PC-9 (cell line): ENCODE measurements at regions of chr12 and their contacts with region 1.

Region 1: DNA sequence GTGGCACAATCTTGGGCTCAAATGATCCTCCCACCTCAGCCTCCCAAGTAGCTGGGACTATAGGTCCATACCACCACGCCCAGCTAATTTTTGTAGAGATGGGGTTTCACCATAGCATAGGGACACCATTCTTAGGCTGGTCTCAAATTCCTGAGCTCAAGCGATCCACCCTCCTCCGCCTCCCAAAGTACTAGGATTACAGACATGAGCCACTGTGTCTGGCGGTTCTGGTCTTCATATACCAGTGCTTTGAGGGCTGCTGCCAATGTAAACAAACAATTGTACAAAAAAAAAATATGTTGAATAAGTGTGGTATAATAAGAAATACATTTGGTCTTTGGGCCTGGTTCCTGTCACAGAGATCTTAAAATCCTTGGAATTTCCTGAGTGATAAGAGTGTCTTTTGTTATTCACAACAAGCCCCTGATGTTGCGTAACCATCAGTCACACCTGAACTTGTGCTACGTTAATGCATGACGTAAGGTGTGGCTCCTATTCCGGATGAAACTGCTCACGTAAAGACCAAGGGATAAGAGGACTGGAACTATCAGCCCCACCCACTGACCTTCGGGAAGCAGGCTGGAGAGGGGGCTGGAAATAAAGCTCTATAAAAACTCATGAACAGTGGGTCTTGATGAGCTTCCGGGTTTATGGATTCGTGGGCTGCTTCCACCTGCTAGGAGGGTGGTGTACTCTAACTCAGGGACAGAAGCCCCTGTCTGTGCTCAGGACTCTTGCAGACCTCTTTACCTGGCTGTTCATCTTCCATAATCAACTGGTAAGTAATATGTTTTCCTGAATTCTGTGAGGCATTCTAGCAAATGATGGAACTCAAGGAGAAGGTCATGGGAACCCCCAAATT is 16.5 kb upstream of the RIMKLB start:
- DNase-seq: peak; percentile 49 to 72
- H3K4me3 ChIP-seq: peak overlapping the region; percentile 29; the same call in 1 of the 2 replicates
- H3K27ac ChIP-seq: no peak overlapping the region
- H3K4me1 ChIP-seq: peaks cover 11% of the 10 kb centered on the region; the same call in 1 of the 2 replicates
- H3K27me3 ChIP-seq: no peaks in the 10 kb centered on the region
- CTCF ChIP-seq: no peak

Region 2: DNA sequence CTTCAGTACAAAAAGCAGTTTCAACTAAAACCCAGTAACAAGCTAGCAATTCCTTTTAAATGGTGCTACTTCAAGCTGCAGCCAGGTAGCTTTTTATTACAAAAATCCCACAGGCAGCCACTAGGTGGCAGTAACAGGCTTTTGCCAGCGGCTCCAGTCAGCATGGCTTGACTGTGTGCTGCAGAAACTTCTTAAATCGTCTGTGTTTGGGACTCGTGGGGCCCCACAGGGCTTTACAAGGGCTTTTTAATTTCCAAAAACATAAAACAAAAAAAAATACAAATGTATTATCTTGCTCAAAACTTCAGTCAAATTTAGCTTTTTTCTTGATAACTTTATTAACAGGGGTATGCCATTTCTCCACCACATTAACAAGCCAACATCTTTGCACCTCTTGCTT is 137.0 kb before region 1 on chr12:
- CTCF ChIA-PET with region 1: interaction called, 13 read pairs
- POLR2A ChIA-PET with region 1: no interaction called
- intact Hi-C with region 1: loop called (anchors 1 kb)
- DNase-seq: peak; percentile 48 to 75
- H3K4me3 ChIP-seq: no peak overlapping the region
- H3K27ac ChIP-seq: no peak overlapping the region
- H3K4me1 ChIP-seq: no peaks in the 10 kb centered on the region
- H3K27me3 ChIP-seq: peaks cover 11% of the 10 kb centered on the region; the same call in 1 of the 2 replicates
- CTCF ChIP-seq: peak; percentile 99

Region 3: DNA sequence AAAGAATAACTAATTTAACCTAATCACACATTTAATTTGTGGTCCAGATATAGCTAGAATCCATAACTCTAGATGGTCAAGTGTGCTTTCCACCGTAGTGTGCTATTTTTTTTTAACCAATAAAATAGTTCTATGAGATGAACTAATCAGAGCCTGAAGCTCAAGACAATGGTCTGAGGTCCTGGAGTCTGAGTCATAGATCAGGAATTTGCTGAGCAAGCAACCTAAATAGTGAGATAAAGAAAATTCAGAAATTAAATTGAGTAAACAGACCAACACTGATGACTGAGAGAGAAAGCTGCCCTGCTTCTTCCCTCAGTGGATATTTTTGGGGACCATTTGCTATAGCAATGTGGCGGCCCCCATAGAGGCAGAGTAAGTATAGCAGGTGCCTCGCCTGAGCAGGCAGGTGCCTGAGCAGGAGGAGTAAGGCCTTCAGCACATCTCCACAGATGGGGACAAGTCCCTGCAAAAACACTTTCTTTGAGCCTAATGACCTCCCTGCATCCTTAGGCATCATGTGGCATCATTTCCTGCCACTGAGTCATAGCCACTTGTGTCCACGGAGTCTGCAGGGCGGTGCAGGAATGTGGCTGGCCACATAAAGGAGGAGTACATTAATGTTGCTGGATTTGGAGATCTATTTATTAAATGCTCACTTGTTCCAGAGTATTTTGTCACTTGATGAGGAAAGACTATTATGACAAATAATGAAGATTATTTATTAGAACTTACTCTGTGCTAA is 126.6 kb before region 1 on chr12:
- CTCF ChIA-PET with region 1: no interaction called
- POLR2A ChIA-PET with region 1: no interaction called
- intact Hi-C with region 1: no loop called
- DNase-seq: peak in 1 of 2 experiments; percentile 5
- H3K4me3 ChIP-seq: no peak overlapping the region
- H3K27ac ChIP-seq: no peak overlapping the region
- H3K4me1 ChIP-seq: no peaks in the 10 kb centered on the region
- H3K27me3 ChIP-seq: no peaks in the 10 kb centered on the region
- CTCF ChIP-seq: no peak

Region 4: DNA sequence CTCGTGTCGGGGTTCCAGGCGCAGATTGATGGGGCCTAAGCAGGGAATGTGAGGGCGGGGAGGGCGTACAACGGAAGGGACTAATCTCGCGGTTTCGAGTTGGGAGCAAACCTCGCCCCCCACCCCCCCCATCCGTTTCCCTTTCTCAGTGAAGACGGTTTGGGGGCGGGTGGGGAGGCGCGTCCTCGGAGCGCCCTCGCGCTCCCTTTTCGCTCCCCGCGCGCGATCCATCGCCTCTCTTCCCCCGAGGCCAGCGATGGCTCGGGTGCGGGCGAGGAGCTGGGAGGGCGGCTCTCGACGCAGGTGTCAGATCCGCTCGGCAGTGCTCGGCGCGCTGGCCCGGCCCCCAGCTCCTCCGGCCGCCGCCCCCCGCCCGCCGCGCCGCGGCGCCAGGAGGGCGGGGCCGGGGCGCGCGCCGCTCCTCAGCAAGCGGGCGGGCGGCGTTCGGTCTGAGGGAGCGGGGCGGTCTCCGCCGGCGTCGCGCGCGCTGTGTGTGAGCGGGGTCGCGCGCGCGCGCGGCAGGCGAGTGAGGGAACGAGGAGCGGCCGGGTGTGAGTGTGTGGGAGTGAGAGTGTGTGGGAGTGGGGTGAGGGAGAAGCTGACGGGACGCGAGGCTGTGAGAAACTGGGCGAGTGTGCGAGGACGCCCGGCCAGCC is 16.3 kb after region 1 on chr12 and contains the start of gene RIMKLB:
- CTCF ChIA-PET with region 1: no interaction called
- POLR2A ChIA-PET with region 1: interaction called, 5 read pairs
- intact Hi-C with region 1: loop called (anchors 1 kb)
- DNase-seq: peak in 1 of 2 experiments; percentile 82
- H3K4me3 ChIP-seq: peak within 1 kb of the TSS; percentile 92
- H3K27ac ChIP-seq: peak within 1 kb of the TSS; percentile 43
- H3K4me1 ChIP-seq: peaks cover 16% of the 10 kb centered on the region
- H3K27me3 ChIP-seq: no peaks in the 10 kb centered on the region
- CTCF ChIP-seq: no peak
- total RNA-seq, gene RIMKLB: 56.9 and 64.8 TPM in 2 replicates

Region 5: DNA sequence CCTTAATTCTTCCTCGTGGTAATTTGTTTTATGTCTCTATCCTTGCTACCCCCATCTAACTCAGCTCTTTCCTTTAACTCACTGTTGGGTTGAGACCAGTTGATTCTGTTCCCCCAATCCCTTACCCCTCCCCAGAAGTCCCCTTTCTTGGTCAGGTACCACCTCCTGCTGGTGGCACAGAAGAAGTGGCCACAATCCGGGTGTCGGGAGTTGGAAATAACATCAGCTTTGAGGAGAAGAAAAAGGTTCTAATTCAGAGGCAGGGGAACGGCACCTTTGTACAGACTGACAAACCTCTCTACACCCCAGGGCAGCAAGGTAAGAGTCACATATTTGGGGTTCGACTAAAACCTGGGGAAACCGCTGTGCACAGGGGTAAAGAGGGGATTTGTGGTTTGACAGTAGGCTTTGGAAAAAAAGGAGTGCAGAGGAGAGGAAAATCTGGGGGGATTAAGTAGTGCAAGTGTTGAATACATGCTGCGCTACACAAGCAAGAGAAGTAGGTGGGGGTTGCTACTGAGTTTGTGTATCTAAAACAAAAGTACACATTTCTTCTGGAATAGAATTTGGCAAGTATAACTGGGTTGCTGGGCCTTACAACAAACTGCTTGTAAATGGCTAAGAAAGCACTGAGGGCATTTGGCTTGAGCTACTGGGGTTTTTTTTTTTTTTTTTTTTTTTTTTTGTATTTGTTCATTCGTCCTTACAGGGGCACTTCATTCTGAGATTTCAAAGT is 142.5 kb after region 1 on chr12:
- CTCF ChIA-PET with region 1: interaction called, 5 read pairs
- POLR2A ChIA-PET with region 1: no interaction called
- intact Hi-C with region 1: loop called (anchors 1 kb)
- DNase-seq: no peak
- H3K4me3 ChIP-seq: no peak overlapping the region
- H3K27ac ChIP-seq: no peak overlapping the region
- H3K4me1 ChIP-seq: peaks cover 18% of the 10 kb centered on the region
- H3K27me3 ChIP-seq: no peaks in the 10 kb centered on the region
- CTCF ChIP-seq: peak; percentile 46; the same call in 1 of the 2 replicates

Region 6: GRCh38 chr12:8866429-8866828 is 185.2 kb after region 1 on chr12:
- CTCF ChIA-PET with region 1: no interaction called
- POLR2A ChIA-PET with region 1: no interaction called
- intact Hi-C with region 1: no loop called
- DNase-seq: no peak
- H3K4me3 ChIP-seq: no peak overlapping the region
- H3K27ac ChIP-seq: no peak overlapping the region
- H3K4me1 ChIP-seq: no peaks in the 10 kb centered on the region
- H3K27me3 ChIP-seq: no peaks in the 10 kb centered on the region
- CTCF ChIP-seq: no peak

Region 7: DNA sequence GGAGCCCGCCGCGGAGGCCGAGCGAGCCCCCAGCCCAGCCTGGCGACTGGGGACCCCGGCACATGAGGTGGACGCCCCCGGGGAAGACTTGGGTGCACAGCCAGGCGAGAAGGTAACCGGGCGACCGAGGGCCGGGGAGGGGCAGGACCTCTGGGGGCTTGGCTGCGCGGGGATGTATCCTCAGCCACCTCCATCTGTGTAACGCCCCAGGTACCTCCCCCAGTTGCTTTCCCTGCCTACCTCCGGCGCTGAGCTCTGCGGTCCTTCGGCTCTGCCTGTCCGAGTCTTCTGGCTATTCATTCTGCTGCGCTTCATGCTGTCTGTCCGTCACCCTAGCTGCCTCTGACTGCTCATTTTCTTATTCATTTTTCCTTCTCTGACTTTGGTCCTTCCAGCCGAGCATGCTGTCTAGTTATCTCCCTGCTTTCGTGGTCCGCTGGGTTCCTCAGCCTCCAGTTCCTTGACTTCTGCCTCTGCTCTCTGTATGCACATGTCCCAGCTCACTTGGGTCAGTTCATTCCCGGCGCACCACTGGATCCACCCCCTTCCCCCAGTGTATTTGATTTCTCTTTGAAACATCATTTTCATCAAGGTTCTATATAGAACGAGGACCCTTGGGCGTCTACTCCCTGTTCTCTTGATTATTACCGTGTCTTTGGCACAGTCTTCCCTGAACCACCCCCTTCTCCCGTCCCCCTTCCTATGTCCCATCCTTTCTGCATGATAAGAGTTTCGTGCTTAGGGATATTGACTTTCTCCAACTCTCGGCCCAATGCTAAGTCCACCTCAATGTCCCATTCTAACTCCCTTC is 233.6 kb after region 1 on chr12:
- CTCF ChIA-PET with region 1: interaction called, 3 read pairs
- POLR2A ChIA-PET with region 1: no interaction called
- intact Hi-C with region 1: loop called (anchors 1 kb)
- DNase-seq: peak; percentile 68 to 88
- H3K4me3 ChIP-seq: peak overlapping the region; percentile 93
- H3K27ac ChIP-seq: no peak overlapping the region
- H3K4me1 ChIP-seq: peaks cover 57% of the 10 kb centered on the region
- H3K27me3 ChIP-seq: no peaks in the 10 kb centered on the region
- CTCF ChIP-seq: no peak

Region 8: DNA sequence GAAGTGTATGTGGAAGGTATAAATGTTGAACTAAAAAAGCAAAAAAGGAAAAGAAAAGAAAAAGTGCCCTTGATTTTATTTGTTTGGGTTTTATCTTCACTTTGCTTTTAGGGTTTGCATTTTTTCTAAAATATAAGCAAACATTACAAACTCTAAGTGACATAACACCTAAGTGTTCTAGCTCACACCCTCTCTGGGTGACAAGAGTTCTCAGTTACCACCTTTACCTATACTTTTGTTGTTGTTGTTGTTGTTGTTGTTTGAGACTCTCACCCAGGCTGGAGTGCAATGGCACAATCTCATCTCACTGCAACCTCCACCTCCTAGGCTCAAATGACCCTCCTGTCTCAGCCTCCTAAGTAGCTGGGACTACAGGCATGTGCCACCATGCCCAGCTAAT is 321.1 kb after region 1 on chr12:
- CTCF ChIA-PET with region 1: no interaction called
- POLR2A ChIA-PET with region 1: interaction called, 10 read pairs
- intact Hi-C with region 1: no loop called
- DNase-seq: no peak
- H3K4me3 ChIP-seq: no peak overlapping the region
- H3K27ac ChIP-seq: no peak overlapping the region
- H3K4me1 ChIP-seq: no peaks in the 10 kb centered on the region
- H3K27me3 ChIP-seq: no peaks in the 10 kb centered on the region; the same call in 1 of the 2 replicates
- CTCF ChIP-seq: no peak

Region 9: DNA sequence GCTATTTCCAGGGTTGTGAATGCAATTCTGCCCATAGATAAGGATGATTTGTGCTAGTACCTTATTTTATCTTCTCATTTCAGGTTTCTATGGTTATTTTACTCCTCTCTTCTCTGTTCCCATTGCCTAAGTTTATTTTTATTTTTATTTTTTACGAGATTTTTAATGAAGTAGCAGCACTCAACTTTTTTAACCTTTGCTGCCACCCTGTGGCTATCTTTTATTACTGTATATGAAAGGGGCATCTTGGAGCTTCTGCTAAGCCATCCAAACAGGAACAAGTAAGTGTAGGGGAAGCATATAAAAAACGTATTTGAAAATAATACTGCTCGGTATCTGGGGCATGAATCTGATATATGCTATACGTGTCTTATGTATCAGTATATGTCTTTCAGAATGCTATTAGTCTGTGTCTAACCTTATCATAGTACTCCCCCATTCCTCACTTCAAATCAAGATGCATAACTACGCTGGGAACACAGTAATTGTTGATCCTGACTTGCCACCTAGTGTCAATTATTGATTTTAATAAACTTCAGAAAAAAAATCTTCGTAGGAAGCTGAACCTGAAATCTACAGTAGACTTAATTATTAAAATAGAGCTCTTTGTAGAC is 368.4 kb after region 1 on chr12:
- CTCF ChIA-PET with region 1: interaction called, 6 read pairs
- POLR2A ChIA-PET with region 1: no interaction called
- intact Hi-C with region 1: loop called (anchors 1 kb)
- DNase-seq: peak; percentile 34 to 52
- H3K4me3 ChIP-seq: no peak overlapping the region
- H3K27ac ChIP-seq: no peak overlapping the region
- H3K4me1 ChIP-seq: no peaks in the 10 kb centered on the region
- H3K27me3 ChIP-seq: peaks cover 13% of the 10 kb centered on the region
- CTCF ChIP-seq: peak; percentile 80